Gastrocnemius medialis (tissue), 4 donors: ENCODE measurements at regions of chr3 and their contacts with region 1.

Region 1: GRCh38 chr3:119891944-119892721 is 110.2 kb downstream of the NR1I2 start:
- DNase-seq: peak in 1 of 2 donors; percentile 11
- ATAC-seq: peak; percentile 77 to 94
- H3K4me3 ChIP-seq: peak overlapping the region in 1 of 4 donors; percentile 4
- H3K27ac ChIP-seq: no peak overlapping the region
- H3K4me1 ChIP-seq: peaks cover 0 to 4% of the 10 kb centered on the region in 2 donors
- H3K27me3 ChIP-seq: no peaks in the 10 kb centered on the region
- CTCF ChIP-seq: peak; percentile 53 to 75 (median 67)
- POLR2A ChIP-seq: no peak

Region 2: DNA sequence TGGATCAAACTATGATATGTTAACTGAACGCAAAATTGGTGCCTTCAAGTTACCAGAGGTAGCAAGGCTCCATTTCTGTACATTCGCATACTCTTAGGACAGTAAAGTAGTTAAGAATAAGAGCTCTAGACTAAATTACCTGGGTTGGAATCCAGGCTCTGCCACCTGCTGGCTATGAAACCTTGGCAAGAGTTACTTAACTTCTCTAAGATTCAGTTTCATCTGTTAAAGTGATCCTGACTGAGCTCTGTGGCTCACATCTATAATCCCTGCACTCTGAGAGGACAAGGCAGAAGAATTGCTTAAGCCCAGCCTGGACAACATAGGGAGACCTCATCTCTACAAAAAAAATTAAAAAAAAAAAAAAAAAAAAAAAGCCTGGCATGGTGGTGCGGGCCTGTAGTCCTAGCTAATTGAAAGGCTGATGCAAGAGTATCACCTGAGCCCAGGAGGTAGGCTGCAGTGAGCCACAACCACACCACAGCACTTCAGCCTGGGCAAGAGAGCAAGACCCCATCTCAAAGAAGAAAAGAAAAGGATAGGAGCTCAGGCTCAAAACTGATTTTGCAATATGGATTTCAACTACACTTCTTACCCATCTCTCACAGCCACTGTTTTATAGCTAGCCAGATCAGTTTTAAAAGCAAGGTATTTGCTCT is 180.9 kb after region 1 on chr3:
- in situ Hi-C with region 1: loop called in 1 of 4 experiments (anchors 25 kb)
- intact Hi-C with region 1: loop called (anchors 5 kb)
- DNase-seq: peak; percentile 5 to 51
- ATAC-seq: peak; percentile 77 to 99
- H3K4me3 ChIP-seq: no peak overlapping the region
- H3K27ac ChIP-seq: peak overlapping the region in 2 of 4 donors; percentile 5 to 41
- H3K4me1 ChIP-seq: peaks cover 23 to 35% of the 10 kb centered on the region in 2 donors
- H3K27me3 ChIP-seq: no peaks in the 10 kb centered on the region
- CTCF ChIP-seq: peak in 4 of 5 experiments; percentile 11 to 34 (median 18)
- POLR2A ChIP-seq: no peak

Region 3: GRCh38 chr3:120182724-120183524 is 290.8 kb after region 1 on chr3:
- in situ Hi-C with region 1: loop called (anchors 5 to 25 kb)
- intact Hi-C with region 1: loop called (anchors 5 kb)
- DNase-seq: no peak
- ATAC-seq: peak in 1 of 2 donors; percentile 47
- H3K4me3 ChIP-seq: no peak overlapping the region
- H3K27ac ChIP-seq: no peak overlapping the region
- H3K4me1 ChIP-seq: no peaks in the 10 kb centered on the region
- H3K27me3 ChIP-seq: no peaks in the 10 kb centered on the region
- CTCF ChIP-seq: peak in 1 of 5 experiments; percentile 29
- POLR2A ChIP-seq: no peak

Region 4: GRCh38 chr3:120348981-120349818 is 457.1 kb after region 1 on chr3 and contains the start of gene LRRC58:
- in situ Hi-C with region 1: no loop called
- intact Hi-C with region 1: loop called (anchors 5 kb)
- DNase-seq: peak; percentile 82 to 93
- ATAC-seq: peak; percentile 88 to 93
- H3K4me3 ChIP-seq: peak within 1 kb of the TSS; percentile 77 to 95 (median 85)
- H3K27ac ChIP-seq: peak within 1 kb of the TSS; percentile 88 to 93 (median 90)
- H3K4me1 ChIP-seq: peaks cover 20 to 43% of the 10 kb centered on the region in 2 donors
- H3K27me3 ChIP-seq: no peaks in the 10 kb centered on the region
- CTCF ChIP-seq: peak in 4 of 5 experiments; percentile 14 to 48 (median 28)
- POLR2A ChIP-seq: peak; percentile 92 to 95
- total RNA-seq, gene LRRC58: 8.4 to 15.2 (median 13.6) TPM

Region 5: DNA sequence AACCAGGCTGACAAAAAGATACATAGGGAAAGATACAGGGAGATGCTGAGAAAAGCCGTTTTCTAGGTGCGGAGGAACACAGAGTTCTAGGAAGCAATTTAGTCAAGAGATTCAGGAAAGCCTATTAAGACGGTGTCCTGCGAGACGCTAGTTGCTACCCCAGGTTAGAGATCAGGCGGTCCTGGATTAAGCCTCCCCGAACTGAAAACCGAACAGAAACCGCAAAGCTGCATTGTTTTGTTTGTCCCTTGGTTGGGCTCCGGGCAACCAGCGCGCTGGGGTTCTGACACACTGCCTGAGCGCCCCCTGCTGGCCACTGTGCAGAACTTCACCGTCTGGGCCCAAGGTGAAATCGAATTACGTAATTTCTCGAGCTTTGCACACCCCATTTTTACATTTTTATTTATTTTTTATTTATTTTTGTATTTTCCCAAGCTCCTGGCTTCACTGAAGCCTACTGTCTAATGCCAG is 666.7 kb after region 1 on chr3:
- in situ Hi-C with region 1: loop called in 1 of 4 experiments (anchors 25 kb)
- intact Hi-C with region 1: no loop called
- DNase-seq: peak; percentile 64 to 77
- ATAC-seq: peak; percentile 70 to 82
- H3K4me3 ChIP-seq: peak overlapping the region; percentile 52 to 60 (median 58)
- H3K27ac ChIP-seq: peak overlapping the region; percentile 51 to 78 (median 64)
- H3K4me1 ChIP-seq: peaks cover 18 to 33% of the 10 kb centered on the region in 2 donors
- H3K27me3 ChIP-seq: no peaks in the 10 kb centered on the region
- CTCF ChIP-seq: peak; percentile 92 to 99 (median 92)
- POLR2A ChIP-seq: no peak